Activated CD4-positive, alpha-beta T cell treated with anti-CD3 and anti-CD28 coated beads, Interleukin-2, amount 10 ng/mL, durations not matched to agents 24 days and 14 days (primary cell): ENCODE measurements at regions of chr11 and their contacts with region 1.

Region 1: DNA sequence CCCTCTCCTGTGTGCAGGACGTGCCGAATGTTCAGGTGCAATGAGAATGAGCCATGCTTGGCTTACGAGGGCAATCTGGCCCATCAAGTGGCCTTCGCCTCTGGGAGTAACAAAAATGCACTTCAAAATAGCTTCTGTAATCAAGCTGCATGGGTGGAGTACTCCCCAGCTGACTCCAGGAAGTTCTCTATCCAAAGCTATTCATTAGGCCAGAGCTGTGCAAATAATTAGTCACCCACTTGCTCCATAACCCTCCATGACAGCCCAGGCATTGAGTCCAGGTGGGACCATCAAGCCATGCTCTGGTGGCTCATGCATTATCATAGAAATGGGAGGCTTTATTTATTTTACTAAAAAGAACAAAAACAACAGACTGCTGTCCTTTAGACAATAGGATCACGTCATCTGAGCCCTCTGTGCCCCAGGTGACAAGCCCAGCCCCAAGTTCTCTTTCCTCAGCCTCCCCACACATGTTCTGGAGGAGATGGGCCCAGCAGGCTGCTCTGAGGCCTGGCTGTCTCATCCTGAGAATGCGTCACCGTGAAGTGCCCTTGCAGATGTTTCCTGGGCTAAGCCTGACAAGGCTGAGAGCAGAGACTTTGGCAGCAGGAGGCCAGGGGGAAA is 244.7 kb downstream of the ETS1 start:
- DNase-seq: peak; percentile 90
- H3K4me3 Mint-ChIP-seq: peak overlapping the region; percentile 24
- H3K27ac Mint-ChIP-seq: peak overlapping the region; percentile 88
- H3K4me1 Mint-ChIP-seq: peaks cover 79% of the 10 kb centered on the region
- H3K27me3 Mint-ChIP-seq: no peaks in the 10 kb centered on the region

Region 2: DNA sequence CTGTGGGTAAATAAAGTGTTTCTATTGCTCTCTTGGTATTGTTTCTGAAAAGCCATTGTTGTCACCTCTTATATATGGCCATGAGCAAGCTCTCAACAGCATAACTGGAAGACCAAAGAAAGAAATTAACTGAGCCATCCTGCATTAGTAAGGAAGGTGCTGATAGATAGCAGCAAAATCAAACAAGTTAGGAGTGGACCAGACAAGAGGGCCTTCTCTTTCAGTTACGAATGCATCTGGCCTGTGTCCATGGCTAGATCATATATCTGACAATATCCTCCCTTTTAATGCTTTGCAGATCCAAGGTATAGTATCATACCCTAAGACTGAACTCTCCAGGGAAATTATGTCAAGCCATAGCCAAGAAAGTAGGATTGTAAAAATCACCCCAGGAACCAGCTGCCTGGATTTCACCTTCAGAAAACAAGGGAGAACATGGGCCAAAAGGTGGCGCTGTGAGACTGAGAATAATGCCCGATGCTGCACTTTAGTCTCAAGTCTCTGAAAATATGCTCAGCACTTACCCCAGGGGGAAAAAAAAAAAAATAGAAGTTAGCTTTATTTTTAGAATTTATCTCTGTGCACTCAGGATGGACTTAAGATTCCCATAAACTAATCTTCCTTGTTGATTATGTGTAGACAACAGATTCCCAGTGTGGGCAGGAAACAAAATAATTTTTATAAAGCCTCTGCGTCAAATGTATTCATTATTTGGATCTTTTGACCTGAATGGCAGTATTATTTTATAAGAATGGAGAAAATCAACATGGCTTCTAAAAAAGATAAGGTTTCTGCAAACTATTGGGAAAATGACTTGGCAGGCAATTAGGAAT is 170.4 kb before region 1 on chr11:
- intact Hi-C with region 1: loop called (anchors 5 kb)
- DNase-seq: peak; percentile 95
- H3K4me3 Mint-ChIP-seq: no peak overlapping the region
- H3K27ac Mint-ChIP-seq: peak overlapping the region; percentile 56
- H3K4me1 Mint-ChIP-seq: peaks cover 25% of the 10 kb centered on the region
- H3K27me3 Mint-ChIP-seq: peaks cover 13% of the 10 kb centered on the region

Region 3: DNA sequence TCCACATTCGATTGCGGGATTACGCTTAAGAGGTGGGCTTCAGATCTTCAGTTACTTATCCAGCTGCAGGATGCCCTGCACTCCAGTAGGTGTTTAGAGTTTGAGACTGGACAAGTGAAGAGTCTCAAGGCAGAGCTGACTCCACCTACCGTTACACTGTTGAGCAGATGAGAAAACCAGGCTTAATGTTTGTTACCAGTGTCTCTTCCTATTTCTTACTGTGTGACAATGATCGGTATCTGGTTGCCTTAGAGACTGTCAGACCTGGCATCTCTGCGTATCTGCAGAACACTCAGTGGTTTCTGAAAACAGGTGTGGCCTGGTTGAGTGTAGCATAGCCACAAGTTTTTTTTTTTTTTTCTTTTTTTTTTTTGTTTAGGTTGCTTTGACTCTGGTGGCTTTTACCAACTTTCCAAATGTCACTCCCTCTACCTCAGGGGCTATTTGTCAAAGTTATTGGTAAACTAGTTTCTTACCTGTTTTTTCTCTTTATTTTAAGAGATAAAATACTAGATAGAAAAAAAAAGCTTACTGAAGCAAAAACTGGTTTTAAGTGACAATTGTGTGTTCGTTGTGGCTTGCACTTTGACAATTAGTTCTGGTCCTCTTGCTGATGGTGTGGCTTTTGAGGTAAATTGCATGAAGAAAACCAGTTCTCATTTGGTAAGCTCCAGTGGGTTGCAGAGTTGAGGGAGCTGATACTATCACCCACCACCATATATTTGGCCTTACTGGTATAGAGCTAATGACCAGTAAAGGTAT is 40.0 kb before region 1 on chr11:
- intact Hi-C with region 1: loop called (anchors 1 kb)
- DNase-seq: peak; percentile 94
- H3K4me3 Mint-ChIP-seq: peak overlapping the region; percentile 81
- H3K27ac Mint-ChIP-seq: peak overlapping the region; percentile 93
- H3K4me1 Mint-ChIP-seq: peaks cover 70% of the 10 kb centered on the region
- H3K27me3 Mint-ChIP-seq: no peaks in the 10 kb centered on the region

Region 4: DNA sequence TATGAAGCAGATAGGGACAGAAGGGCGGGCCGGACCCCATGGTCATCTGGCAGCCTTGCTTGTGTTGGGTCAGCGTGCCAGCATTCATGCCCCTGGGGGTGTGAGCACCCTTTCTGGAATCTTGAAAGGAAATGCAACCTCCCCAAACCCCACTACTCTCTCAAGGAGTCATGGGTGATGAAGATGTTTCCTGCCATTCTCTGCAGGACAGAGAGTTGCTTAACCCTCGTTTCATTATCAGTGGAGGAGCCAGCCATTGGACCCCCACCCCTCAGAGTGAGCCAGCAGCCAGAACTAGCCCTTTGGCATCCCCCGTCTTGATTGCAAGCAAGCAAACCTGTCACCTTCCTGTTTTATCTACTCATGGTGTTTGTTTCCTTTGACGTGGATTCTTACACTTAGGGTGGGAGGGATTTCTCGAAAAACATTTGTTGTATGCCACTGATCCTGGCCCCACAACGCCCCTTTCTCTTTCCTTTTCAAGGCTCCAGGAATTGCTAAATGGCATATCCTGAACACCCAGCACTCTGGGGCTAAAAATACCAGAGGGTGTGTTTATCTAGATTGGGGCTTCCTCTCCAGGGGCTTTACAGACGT is 13.6 kb before region 1 on chr11:
- intact Hi-C with region 1: loop called (anchors 1 kb)
- DNase-seq: peak; percentile 85
- H3K4me3 Mint-ChIP-seq: peak overlapping the region; percentile 70
- H3K27ac Mint-ChIP-seq: peak overlapping the region; percentile 97
- H3K4me1 Mint-ChIP-seq: peaks cover 73% of the 10 kb centered on the region
- H3K27me3 Mint-ChIP-seq: no peaks in the 10 kb centered on the region

Region 5: GRCh38 chr11:128412847-128413791 is 70.5 kb after region 1 on chr11:
- intact Hi-C with region 1: loop called (anchors 1 kb)
- DNase-seq: no peak
- H3K4me3 Mint-ChIP-seq: peak overlapping the region; percentile 1
- H3K27ac Mint-ChIP-seq: peak overlapping the region; percentile 46
- H3K4me1 Mint-ChIP-seq: peaks cover 26% of the 10 kb centered on the region
- H3K27me3 Mint-ChIP-seq: no peaks in the 10 kb centered on the region

Region 6: DNA sequence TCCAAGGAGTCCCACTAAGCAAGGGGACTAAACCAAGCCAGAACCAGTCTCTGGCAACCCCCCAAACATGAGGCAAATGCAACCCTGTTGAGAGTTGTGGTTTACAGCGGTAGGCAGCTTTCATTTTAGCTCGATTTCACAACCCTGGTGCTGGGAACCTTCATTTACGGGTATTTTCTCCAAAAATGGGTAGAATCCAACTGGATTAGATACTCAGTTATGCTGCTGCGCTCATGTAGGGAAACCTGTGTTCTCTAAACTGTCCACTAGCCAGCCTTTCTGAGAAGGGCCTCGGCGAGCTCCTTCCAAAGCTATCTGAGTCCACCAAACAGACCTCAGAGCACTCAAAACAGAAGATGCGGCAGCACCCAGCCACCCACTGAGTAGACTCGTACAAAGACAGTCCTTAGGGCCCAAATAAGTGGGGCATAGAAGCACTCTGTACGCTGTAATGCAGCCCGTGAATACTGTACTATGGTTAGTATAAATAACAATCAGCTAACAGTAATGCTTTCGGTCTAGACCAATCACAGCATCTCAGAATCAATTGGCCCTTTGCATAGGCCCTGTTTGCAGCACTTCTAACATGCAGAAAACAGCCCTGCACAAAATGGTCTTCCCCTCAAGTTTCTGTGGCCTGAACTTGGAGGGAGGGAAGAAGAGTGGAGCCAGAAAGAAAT is 140.0 kb after region 1 on chr11:
- intact Hi-C with region 1: no loop called
- DNase-seq: peak; percentile 86
- H3K4me3 Mint-ChIP-seq: peak overlapping the region; percentile 85
- H3K27ac Mint-ChIP-seq: peak overlapping the region; percentile 96
- H3K4me1 Mint-ChIP-seq: peaks cover 91% of the 10 kb centered on the region
- H3K27me3 Mint-ChIP-seq: no peaks in the 10 kb centered on the region

Region 7: GRCh38 chr11:128506999-128507611 is 164.5 kb after region 1 on chr11:
- intact Hi-C with region 1: loop called (anchors 5 kb)
- DNase-seq: peak; percentile 78
- H3K4me3 Mint-ChIP-seq: peak overlapping the region; percentile 93
- H3K27ac Mint-ChIP-seq: peak overlapping the region; percentile 98
- H3K4me1 Mint-ChIP-seq: peaks cover 93% of the 10 kb centered on the region
- H3K27me3 Mint-ChIP-seq: no peaks in the 10 kb centered on the region